CD4-positive, alpha-beta memory T cell (primary cell): ENCODE measurements at regions of chr1 and their contacts with region 1.

Region 1: DNA sequence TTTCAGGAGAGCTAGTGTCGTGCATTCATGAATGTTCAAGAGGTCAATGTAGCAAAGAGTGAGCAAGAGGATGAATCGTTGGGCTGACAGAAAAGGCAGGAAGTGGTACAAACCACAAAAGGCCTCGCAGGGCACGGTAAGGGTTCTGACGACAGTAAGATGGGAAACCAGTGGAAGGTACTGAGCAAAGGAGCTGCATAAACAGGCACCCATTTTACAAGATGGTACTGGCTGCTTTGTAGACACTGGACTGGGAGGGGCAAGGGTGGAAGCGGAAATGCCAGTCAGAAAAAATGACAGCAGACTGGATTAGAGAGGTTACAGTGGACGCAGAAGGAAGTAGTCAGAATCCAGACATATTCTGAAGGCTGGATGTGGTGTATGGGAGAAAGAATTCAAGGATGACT is 123.5 kb downstream of the PTPN14 start:
- DNase-seq: peak; percentile 73 to 81 (median 74)
- H3K4me3 ChIP-seq: no peak overlapping the region
- H3K4me3 Mint-ChIP-seq: peak overlapping the region; percentile 5 to 77 (median 50)
- H3K27ac ChIP-seq: no peak overlapping the region
- H3K27ac Mint-ChIP-seq: peak overlapping the region; percentile 66 to 93 (median 90)
- H3K4me1 ChIP-seq: peaks cover 21% of the 10 kb centered on the region
- H3K4me1 Mint-ChIP-seq: peaks cover 15 to 27% (median 22%) of the 10 kb centered on the region in 4 donors
- H3K27me3 ChIP-seq: no peaks in the 10 kb centered on the region
- H3K27me3 Mint-ChIP-seq: peaks cover 0 to 1% of the 10 kb centered on the region in 2 donors

Region 2: DNA sequence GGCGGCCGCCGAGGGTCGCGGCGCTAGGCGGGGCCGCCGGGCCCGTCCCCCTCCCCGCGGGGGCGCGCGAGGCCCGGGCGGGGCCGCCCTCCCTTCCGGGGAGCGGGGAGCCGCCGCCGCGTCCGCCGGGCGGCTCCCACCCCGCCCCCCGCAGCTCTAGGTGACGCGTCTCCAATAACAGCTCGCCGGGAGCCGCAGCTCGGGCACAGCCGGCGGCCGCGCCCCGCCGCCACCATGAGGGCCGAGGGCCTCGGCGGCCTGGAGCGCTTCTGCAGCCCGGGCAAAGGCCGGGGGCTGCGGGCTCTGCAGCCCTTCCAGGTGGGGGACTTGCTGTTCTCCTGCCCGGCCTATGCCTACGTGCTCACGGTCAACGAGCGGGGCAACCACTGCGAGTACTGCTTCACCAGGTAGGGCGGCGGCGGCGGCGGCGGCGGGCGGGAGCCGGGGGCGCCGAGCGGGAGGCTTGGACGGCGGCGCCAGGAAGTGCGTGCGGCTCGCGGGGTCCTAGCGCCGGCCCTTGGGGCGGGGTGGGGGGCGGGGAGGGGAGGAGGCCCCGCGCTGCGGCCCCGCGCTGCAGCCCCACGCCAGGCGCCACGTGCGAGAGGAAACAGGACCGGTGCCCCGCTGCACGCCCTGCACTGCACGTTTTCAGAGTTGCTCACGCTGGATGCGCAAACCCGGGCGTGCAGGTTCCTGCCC is 146.7 kb before region 1 on chr1 and contains the start of gene SMYD2:
- CTCF ChIA-PET with region 1: no interaction called
- POLR2A ChIA-PET with region 1: no interaction called
- intact Hi-C with region 1: loop called (anchors 10 kb)
- DNase-seq: peak; percentile 67 to 77 (median 72)
- H3K4me3 ChIP-seq: peak within 1 kb of the TSS; percentile 79
- H3K4me3 Mint-ChIP-seq: peak within 1 kb of the TSS; percentile 89 to 96 (median 92)
- H3K27ac ChIP-seq: peak within 1 kb of the TSS; percentile 68
- H3K27ac Mint-ChIP-seq: peak within 1 kb of the TSS; percentile 69 to 97 (median 93)
- H3K4me1 ChIP-seq: peaks cover 40% of the 10 kb centered on the region
- H3K4me1 Mint-ChIP-seq: peaks cover 34 to 56% (median 45%) of the 10 kb centered on the region in 4 donors
- H3K27me3 ChIP-seq: no peaks in the 10 kb centered on the region
- H3K27me3 Mint-ChIP-seq: no peaks in the 10 kb centered on the region
- total RNA-seq, gene SMYD2: 41.4 to 41.9 TPM

Region 3: DNA sequence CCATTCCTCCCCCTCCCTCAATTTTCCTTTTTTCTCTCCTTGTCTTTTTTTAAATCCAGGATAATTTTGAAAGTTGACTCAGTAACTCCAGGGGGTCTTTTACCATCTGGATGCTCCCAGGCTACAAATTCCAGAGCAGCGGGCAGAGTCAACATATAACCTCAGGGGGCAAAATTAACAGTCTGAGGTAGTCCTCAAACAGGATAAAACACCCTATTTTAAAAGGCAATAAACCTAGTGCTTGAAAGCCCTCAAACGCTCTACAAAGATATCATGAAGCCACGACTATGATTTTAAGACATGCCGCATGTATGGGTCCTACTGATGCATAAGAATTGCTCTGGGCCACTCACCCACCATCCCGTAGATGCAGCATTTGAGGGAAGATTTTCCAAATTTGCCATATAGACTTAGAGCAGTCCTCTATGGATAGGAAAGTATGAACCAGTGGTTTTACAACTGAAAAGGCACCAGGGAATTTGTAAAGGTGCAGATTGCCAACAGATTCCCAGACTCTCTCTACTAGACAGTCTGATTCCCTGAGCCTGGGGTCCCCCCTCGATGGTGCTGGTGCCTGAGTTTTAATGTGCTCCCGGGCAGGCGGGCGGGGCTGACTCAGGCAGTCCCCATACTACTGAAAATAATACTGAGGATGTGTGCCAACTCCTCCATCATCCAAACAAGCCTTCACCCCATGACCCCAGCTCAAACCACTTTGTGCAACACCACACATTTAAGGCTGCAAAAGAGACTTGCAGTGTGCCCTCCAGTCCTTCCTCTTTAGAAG is 86.4 kb after region 1 on chr1:
- CTCF ChIA-PET with region 1: no interaction called
- POLR2A ChIA-PET with region 1: no interaction called
- intact Hi-C with region 1: no loop called
- DNase-seq: no peak
- H3K4me3 ChIP-seq: no peak overlapping the region
- H3K4me3 Mint-ChIP-seq: no peak overlapping the region
- H3K27ac ChIP-seq: no peak overlapping the region
- H3K27ac Mint-ChIP-seq: no peak overlapping the region
- H3K4me1 ChIP-seq: peaks cover 6% of the 10 kb centered on the region
- H3K4me1 Mint-ChIP-seq: peaks cover 0 to 8% (median 4%) of the 10 kb centered on the region in 4 donors
- H3K27me3 ChIP-seq: no peaks in the 10 kb centered on the region
- H3K27me3 Mint-ChIP-seq: peaks cover 6% of the 10 kb centered on the region in 2 donors